Heart right ventricle (tissue), 16 donors: ENCODE measurements at regions of chr15 and their contacts with region 1.

Region 1: DNA sequence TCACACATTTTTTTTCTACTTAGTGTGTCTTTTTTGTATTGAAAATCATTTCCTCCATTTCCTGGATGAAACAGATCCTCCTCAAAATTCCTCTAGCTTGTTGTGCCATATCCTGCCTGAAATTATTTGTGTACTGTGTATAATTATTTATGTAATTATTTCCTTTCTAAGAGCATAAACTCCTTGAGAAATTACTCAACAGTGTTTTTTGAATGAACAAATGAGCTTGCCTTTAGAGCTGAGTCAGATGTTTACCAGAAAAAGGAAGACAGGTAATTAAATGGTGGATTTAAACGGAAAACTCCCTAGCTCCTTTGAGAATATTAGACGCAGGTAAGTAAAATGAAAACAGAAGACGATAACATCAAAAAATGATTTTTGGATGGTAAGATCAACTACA is 13.2 kb upstream of the SECISBP2L start:
- DNase-seq: no peak
- ATAC-seq: no peak
- H3K4me3 ChIP-seq: no peak overlapping the region
- H3K27ac ChIP-seq: no peak overlapping the region
- H3K4me1 ChIP-seq: peaks cover 0 to 21% (median 4%) of the 10 kb centered on the region in 9 donors
- H3K27me3 ChIP-seq: no peaks in the 10 kb centered on the region
- CTCF ChIP-seq: no peak

Region 2: GRCh38 chr15:49110158-49110944 is 50.9 kb after region 1 on chr15:
- intact Hi-C with region 1: loop called in 1 of 10 experiments (anchors 2 kb)
- DNase-seq: no peak
- ATAC-seq: peak in 2 of 8 donors; percentile 27 to 59
- H3K4me3 ChIP-seq: no peak overlapping the region
- H3K27ac ChIP-seq: no peak overlapping the region
- H3K4me1 ChIP-seq: peaks cover 0 to 5% (median 0%) of the 10 kb centered on the region in 9 donors
- H3K27me3 ChIP-seq: no peaks in the 10 kb centered on the region
- CTCF ChIP-seq: no peak